ENCODE measurements at regions of chr4 and their contacts with region 1.

Region 1: DNA sequence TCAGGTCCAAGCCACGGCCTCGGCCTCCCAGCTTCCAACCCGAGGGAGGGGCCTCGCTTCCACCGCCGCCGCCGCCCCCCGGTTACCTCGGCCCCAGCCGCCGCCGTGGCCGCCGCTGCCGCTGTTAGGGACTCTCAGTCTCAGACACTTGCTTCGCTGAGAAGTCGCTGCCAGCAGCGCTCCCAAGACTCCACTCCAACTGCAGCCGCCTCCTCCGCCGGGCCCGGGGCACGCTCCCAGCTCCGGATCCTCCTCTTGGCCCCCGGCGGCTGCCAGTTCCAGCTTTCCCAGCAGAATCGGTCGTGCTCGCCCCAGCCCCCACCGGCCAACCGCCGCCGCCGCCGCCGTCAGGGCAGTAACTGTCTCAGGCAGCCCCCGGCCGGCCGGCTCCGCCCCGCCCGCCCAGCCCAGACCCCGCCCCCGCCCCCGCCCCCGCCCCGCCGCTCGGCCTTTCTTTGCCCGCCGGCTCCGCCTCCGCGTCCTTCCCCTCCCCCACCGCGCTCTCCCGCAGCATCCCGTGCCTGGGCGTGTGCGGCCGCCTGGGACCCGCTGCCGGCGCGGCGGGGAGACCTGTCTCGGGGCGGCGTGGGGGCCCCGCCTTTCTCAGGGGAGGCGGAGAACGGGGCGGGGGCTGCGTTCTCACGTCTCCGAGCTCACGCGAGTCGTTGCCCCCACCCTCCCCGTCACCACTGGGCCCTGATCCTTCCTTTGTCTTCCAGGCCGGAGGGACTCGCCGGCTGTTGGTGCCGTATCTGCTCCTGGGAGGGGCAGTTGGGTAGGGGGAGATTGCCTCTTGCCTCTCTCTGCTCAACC is at the start of gene ANKRD50:
- DNase-seq: peak; percentile 95
- total RNA-seq, gene ANKRD50: 16.1 TPM

Region 2: GRCh38 chr4:124631760-124632159 is 80.8 kb before region 1 on chr4:
- intact Hi-C with region 1: loop called (anchors 1 kb)
- DNase-seq: no peak

Region 3: GRCh38 chr4:124694946-124695598 is 17.5 kb before region 1 on chr4:
- intact Hi-C with region 1: no loop called
- DNase-seq: no peak

Region 4: DNA sequence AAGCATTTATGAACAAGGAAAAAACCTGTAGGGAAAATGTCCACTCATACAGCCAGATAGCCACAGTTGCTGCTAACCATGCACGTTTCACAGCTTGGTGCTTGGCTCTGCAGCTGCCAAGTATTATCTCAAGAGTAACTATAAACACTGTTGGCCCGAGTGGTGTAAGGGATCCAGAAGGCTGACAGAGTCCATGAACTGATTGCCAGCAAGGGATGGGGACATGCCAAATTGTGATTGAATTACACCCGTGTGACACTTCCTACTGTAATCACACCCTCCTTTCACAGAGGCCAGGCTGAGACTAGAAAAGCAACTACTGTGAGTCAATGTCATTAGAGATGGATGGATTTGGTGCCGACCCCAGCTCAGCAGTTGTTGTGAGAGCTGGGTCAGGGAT is 223.8 kb after region 1 on chr4:
- intact Hi-C with region 1: loop called (anchors 2 kb)
- DNase-seq: peak; percentile 76

Measured in cardiac septum (tissue), 1 donor.